Activated B cell treated with CpG ODN at 0.5 μM for 24 hours (primary cell): ENCODE measurements at regions of chr3 and their contacts with region 1.

Region 1: DNA sequence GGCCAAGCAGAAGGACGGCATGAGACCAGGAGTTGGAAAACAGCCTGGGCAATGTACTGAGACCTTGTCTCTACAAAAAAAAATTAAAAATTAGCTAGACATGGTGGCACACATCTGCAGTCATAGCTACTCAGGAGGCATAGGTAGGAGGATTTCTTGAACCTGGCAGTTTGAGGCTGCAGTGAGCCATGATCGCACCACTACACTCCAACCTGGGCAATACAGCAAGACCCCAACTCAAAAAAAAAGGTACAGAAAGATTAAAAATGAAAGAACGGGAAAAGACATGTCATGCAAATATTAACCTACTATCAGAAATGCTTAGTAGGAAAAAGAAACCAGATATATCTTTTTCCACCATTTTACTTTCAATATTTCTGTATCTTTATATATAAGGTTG is 99.6 kb upstream of the ATP11B start:
- DNase-seq: no peak
- ATAC-seq: no peak
- H3K4me3 Mint-ChIP-seq: no peak overlapping the region
- H3K27ac Mint-ChIP-seq: no peak overlapping the region
- H3K4me1 Mint-ChIP-seq: no peaks in the 10 kb centered on the region
- H3K27me3 Mint-ChIP-seq: peaks cover 14% of the 10 kb centered on the region
- CTCF ChIP-seq: no peak

Region 2: GRCh38 chr3:182739619-182740018 is 45.9 kb after region 1 on chr3:
- CTCF ChIA-PET with region 1: no interaction called
- POLR2A ChIA-PET with region 1: interaction called, 10 read pairs
- intact Hi-C with region 1: no loop called
- DNase-seq: no peak
- ATAC-seq: no peak
- H3K4me3 Mint-ChIP-seq: no peak overlapping the region
- H3K27ac Mint-ChIP-seq: no peak overlapping the region
- H3K4me1 Mint-ChIP-seq: no peaks in the 10 kb centered on the region
- H3K27me3 Mint-ChIP-seq: peaks cover 13% of the 10 kb centered on the region
- CTCF ChIP-seq: no peak